ENCODE measurements at regions of chr7 and their contacts with region 1.

Region 1: DNA sequence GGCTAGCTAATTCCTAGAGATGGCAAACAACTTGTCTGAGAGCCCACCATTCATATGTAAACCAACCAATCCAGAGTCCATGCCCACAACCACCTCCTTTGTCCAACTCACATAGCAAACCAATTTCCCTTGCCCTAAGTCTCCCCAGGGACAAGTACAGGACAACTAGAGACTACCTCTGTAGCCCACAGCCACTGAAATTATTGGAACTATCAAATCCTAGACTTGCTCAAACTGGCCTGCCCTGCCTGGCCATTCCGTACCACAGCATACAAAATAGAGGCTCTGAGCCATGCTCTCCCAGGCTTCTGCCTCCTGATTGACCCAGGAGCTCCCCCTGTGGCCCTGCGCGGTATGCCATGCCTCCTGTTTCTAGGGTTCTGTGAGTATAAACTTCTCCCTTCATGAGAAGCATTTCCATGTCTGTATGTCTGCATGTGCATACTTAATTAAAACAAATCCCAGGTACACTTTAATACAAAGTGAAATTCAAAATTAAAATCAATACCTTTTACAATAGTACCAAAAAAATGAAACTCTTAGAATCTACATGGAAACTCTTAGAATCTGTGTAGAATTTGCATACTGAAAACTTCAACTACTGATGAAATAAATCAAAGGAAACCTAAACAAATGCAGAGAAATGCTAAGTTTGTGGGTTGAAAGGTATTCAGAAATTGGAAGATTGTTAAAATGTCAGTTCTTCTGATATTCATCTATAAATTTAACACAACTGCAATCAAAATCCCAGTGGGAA is 4.0 kb upstream of the HECW1 start:
- DNase-seq: peak; percentile 93
- ATAC-seq: peak; percentile 83
- H3K4me3 Mint-ChIP-seq: no peak overlapping the region
- H3K27ac Mint-ChIP-seq: peak overlapping the region; percentile 95
- H3K4me1 Mint-ChIP-seq: peaks cover 44% of the 10 kb centered on the region
- H3K27me3 Mint-ChIP-seq: peaks cover 13% of the 10 kb centered on the region
- CTCF ChIP-seq: peak; percentile 84

Region 2: DNA sequence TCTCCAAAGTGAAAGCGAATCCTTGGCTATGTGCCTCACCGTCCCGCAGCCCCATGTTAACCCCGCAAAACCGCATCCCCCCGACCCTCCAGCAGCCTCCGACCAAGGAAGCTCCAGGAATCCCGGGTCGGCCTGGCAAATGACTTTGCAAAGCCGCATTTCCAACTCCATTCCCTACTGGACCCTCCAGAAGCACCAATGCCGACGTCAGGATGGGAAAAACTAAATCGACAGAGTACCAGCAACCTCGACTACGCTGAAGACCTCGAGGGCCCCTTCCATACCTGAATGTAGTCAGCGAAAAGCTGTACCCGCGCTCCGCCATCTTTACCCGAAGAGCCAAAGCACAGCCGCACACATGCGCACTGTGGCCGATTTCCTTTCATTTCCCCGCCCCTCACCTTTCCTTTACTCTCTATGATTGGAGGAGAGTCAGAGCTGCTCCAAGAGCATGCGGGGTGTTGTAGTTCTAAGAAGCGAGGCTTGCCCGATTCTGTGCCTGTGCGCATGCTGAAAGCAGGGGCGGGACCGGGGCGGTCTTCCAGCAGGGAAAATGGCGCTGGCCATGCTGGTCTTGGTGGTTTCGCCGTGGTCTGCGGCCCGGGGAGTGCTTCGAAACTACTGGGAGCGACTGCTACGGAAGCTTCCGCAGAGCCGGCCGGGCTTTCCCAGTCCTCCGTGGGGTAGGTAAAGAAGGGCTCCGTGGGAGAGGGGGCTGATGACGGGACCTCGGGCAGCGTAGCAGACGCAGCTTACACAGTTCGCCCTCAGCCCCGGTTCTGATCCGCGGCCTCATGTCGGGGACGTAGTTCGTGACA is 176.4 kb before region 1 on chr7 and contains the starts of genes MRPL32 and PSMA2:
- CTCF ChIA-PET with region 1: interaction called, 17 read pairs
- POLR2A ChIA-PET with region 1: interaction called, 5 read pairs
- DNase-seq: peak; percentile 94
- ATAC-seq: peak; percentile 99
- H3K4me3 Mint-ChIP-seq: peak within 1 kb of the TSS; percentile 100
- H3K27ac Mint-ChIP-seq: peak within 1 kb of the TSS; percentile 99
- H3K4me1 Mint-ChIP-seq: peaks cover 23% of the 10 kb centered on the region
- H3K27me3 Mint-ChIP-seq: no peaks in the 10 kb centered on the region
- CTCF ChIP-seq: no peak
- total RNA-seq, gene MRPL32: 72.2 to 84.4 TPM (median 75.7 TPM) in 3 replicates
- total RNA-seq, gene PSMA2: 203 to 228 TPM (median 219 TPM) in 3 replicates

Region 3: GRCh38 chr7:42993038-42993437 is 115.4 kb before region 1 on chr7:
- CTCF ChIA-PET with region 1: interaction called, 18 read pairs
- POLR2A ChIA-PET with region 1: no interaction called
- DNase-seq: peak; percentile 41
- ATAC-seq: peak; percentile 95
- H3K4me3 Mint-ChIP-seq: no peak overlapping the region
- H3K27ac Mint-ChIP-seq: no peak overlapping the region
- H3K4me1 Mint-ChIP-seq: peaks cover 20% of the 10 kb centered on the region
- H3K27me3 Mint-ChIP-seq: no peaks in the 10 kb centered on the region
- CTCF ChIP-seq: no peak

Region 4: GRCh38 chr7:43071604-43072003 is 36.8 kb before region 1 on chr7:
- CTCF ChIA-PET with region 1: interaction called, 34 read pairs
- POLR2A ChIA-PET with region 1: interaction called, 4 read pairs
- DNase-seq: peak; percentile 88
- ATAC-seq: peak; percentile 98
- H3K4me3 Mint-ChIP-seq: no peak overlapping the region
- H3K27ac Mint-ChIP-seq: no peak overlapping the region
- H3K4me1 Mint-ChIP-seq: peaks cover 24% of the 10 kb centered on the region
- H3K27me3 Mint-ChIP-seq: no peaks in the 10 kb centered on the region
- CTCF ChIP-seq: peak; percentile 85

Region 5: GRCh38 chr7:43119371-43120075 is 11.1 kb after region 1 on chr7:
- CTCF ChIA-PET with region 1: interaction called, 18 read pairs
- POLR2A ChIA-PET with region 1: no interaction called
- DNase-seq: no peak
- ATAC-seq: peak; percentile 51
- H3K4me3 Mint-ChIP-seq: no peak overlapping the region
- H3K27ac Mint-ChIP-seq: no peak overlapping the region
- H3K4me1 Mint-ChIP-seq: peaks cover 34% of the 10 kb centered on the region
- H3K27me3 Mint-ChIP-seq: no peaks in the 10 kb centered on the region; the same call in 1 of the 2 replicates
- CTCF ChIP-seq: no peak

Region 6: GRCh38 chr7:43139137-43139536 is 30.7 kb after region 1 on chr7:
- CTCF ChIA-PET with region 1: interaction called, 23 read pairs
- POLR2A ChIA-PET with region 1: no interaction called
- DNase-seq: no peak
- ATAC-seq: peak; percentile 16
- H3K4me3 Mint-ChIP-seq: no peak overlapping the region
- H3K27ac Mint-ChIP-seq: peak overlapping the region; percentile 90
- H3K4me1 Mint-ChIP-seq: peaks cover 74% of the 10 kb centered on the region
- H3K27me3 Mint-ChIP-seq: no peaks in the 10 kb centered on the region
- CTCF ChIP-seq: no peak

Region 7: GRCh38 chr7:43260980-43261878 is 152.8 kb after region 1 on chr7:
- CTCF ChIA-PET with region 1: interaction called, 13 read pairs
- POLR2A ChIA-PET with region 1: no interaction called
- DNase-seq: peak; percentile 85
- ATAC-seq: peak; percentile 98
- H3K4me3 Mint-ChIP-seq: no peak overlapping the region
- H3K27ac Mint-ChIP-seq: no peak overlapping the region
- H3K4me1 Mint-ChIP-seq: 0 out of 2 replicates have a peak, but pooled peaks cover 3% of the 10 kb centered on the region
- H3K27me3 Mint-ChIP-seq: no peaks in the 10 kb centered on the region
- CTCF ChIP-seq: peak; percentile 97